ENCODE measurements at regions of chr5 and their contacts with region 1.

Region 1: DNA sequence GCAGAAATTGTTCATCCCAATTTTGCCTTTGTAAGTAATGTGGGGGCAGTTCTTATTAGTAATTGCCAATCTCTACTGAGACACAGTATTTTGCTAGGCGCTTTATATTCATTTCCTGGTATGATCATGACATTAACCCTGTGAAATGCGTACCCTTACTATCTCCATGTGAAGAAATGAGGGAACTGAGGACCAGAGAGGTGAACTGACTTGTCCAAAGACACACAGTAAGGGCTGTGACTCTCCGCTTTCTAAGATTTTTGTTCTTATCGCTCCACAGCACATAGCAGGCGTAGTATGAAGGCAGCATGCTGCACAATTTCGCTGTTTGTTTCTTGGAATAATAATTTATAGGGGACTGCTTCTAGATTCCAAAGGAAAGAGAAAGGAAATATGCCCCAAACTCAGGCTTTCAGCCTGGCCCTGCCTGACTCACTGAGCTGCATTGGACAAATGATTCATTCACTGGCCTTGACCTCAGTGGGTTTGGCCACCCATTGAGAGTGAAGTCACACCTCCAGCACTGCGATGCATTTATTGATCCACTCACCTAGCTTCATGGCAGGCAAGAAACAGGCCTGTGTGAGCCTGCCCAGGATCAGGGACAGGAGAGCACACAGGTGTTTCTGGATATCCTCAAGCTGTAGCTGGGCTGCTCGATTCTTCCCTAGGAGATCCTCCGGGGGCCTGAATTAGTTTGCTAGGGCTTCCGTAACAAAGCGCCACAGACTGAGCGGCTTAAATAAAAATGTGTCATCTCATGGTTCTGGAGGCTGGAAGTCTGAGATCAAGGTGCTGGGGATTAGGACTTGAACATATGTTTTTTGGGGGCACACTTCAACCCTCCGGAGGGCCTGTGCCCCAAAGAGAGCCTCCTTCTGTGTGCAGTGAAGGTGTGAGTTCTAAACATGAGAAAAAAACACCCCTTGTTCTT is 7.2 kb upstream of the DUSP1 start:
- DNase-seq: peak; percentile 97
- H3K4me3 Mint-ChIP-seq: peak overlapping the region; percentile 69
- H3K27ac Mint-ChIP-seq: peak overlapping the region; percentile 99
- H3K4me1 Mint-ChIP-seq: peaks cover 70% of the 10 kb centered on the region
- H3K27me3 Mint-ChIP-seq: no peaks in the 10 kb centered on the region
- CTCF ChIP-seq: no peak

Region 2: DNA sequence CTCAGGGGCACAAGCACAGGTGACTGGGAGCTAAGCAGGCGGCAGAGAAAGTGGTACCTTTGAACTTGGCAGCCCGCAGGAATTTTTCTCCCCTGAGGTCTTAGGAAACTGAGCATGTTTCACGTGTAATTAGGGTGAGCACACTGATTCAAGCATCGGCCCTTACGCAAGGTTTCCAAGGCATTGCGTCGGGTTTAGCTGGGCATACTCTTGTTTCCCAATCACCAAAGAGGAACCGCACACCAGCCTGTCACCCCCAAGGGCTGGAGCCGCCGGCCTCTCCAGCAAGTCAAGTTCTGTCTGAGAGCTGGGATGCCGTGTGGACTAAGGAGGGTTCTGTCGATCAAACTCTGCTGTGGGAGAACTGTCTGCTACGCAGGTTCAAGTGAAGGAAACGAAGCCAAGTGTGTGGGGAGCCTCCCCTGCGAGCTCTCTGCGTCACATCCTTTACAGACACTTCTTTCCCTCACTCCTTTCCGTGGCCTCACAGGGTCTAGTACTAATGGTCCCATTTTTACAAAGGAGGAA is 108.9 kb after region 1 on chr5:
- CTCF ChIA-PET with region 1: interaction called, 3 read pairs
- POLR2A ChIA-PET with region 1: interaction called, 74 read pairs
- intact Hi-C with region 1: no loop called
- DNase-seq: peak; percentile 100
- H3K4me3 Mint-ChIP-seq: peak overlapping the region; percentile 61
- H3K27ac Mint-ChIP-seq: peak overlapping the region; percentile 98
- H3K4me1 Mint-ChIP-seq: peaks cover 46% of the 10 kb centered on the region
- H3K27me3 Mint-ChIP-seq: no peaks in the 10 kb centered on the region
- CTCF ChIP-seq: no peak

Region 3: DNA sequence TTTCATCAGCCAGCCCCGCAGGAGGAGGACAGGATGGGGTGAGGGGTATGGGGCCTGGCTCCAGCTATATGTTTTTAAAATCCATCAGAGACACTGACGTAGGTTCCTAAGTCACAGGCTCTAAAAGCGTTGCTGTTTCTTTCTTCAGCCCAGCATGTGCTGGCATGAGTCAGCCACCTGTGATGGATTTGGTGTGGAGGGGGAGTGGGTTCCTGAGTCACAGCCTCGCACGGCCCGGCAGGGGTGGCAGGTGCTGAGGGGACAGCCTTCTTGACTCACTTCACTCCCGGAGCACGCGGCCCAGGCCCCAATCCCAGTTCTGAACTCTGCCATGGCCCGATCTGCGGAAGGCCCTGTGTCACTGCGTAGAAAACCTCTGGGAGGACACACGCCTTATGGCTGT is 142.3 kb after region 1 on chr5:
- CTCF ChIA-PET with region 1: no interaction called
- POLR2A ChIA-PET with region 1: interaction called, 13 read pairs
- intact Hi-C with region 1: no loop called
- DNase-seq: peak; percentile 95
- H3K4me3 Mint-ChIP-seq: no peak overlapping the region
- H3K27ac Mint-ChIP-seq: peak overlapping the region; percentile 89
- H3K4me1 Mint-ChIP-seq: peaks cover 26% of the 10 kb centered on the region
- H3K27me3 Mint-ChIP-seq: no peaks in the 10 kb centered on the region
- CTCF ChIP-seq: no peak